Heart right ventricle (tissue), 16 donors: ENCODE measurements at regions of chr16 and their contacts with region 1.

Region 1: GRCh38 chr16:70380861-70381603 is 34.3 kb downstream of the DDX19A start:
- DNase-seq: peak; percentile 96 to 97
- ATAC-seq: peak; percentile 94 to 98 (median 96)
- H3K4me3 ChIP-seq: peak overlapping the region; percentile 56 to 85 (median 66)
- H3K27ac ChIP-seq: peak overlapping the region; percentile 16 to 91 (median 86)
- H3K4me1 ChIP-seq: peaks cover 0 to 26% (median 18%) of the 10 kb centered on the region in 9 donors
- H3K27me3 ChIP-seq: no peaks in the 10 kb centered on the region
- CTCF ChIP-seq: peak in 6 of 9 donors; percentile 31 to 60 (median 46)

Region 2: GRCh38 chr16:70395345-70395901 is 14.4 kb after region 1 on chr16:
- intact Hi-C with region 1: no loop called
- DNase-seq: peak; percentile 59 to 76
- ATAC-seq: peak; percentile 57 to 88 (median 78)
- H3K4me3 ChIP-seq: no peak overlapping the region
- H3K27ac ChIP-seq: no peak overlapping the region
- H3K4me1 ChIP-seq: peaks cover 4 to 22% (median 18%) of the 10 kb centered on the region in 9 donors
- H3K27me3 ChIP-seq: no peaks in the 10 kb centered on the region
- CTCF ChIP-seq: peak; percentile 35 to 85 (median 73)

Region 3: DNA sequence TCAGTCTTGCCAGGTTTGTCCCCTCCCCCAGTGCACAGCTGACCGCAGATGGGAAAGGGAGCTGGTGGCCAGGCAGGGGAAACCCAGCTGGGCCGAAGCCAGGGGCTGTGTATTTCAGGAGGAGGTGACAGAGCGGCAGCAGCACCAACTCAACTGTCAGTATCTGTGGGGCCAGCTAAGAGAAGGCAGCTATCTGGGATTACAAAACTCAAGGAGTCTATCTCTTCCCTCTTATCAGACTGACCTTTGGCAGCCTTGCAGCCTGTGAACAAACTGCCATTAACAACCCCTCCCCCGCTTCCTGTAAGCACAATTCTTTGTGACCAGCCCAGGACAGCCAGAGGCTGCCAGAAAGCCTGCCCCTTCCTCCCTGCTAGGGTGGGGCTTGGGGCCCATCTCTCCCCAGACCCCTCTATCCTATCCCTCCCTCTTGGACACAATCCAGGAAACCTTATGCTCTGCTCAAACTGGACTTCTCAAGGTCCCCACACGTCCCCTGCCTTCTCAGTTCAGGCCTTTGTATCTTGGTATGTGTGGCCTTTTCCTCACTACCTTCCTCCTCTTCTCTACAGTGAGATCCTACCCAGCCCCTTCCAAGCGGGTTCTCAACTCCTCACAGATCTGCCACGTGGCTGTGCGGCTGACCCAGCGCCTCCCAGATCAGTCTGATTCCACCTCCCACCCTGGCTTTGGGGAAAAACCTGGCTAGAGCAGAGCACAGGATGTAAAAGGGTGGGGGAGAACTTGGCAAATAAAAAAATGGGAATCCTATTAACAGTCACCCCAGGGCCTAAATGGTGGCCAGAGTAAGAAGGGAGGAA is 47.4 kb after region 1 on chr16:
- intact Hi-C with region 1: loop called in 4 of 10 experiments (anchors 2 to 5 kb)
- DNase-seq: peak; percentile 96
- ATAC-seq: peak; percentile 85 to 94 (median 90)
- H3K4me3 ChIP-seq: peak overlapping the region in 5 of 10 donors; percentile 0 to 12 (median 8)
- H3K27ac ChIP-seq: peak overlapping the region; percentile 68 to 94 (median 88)
- H3K4me1 ChIP-seq: peaks cover 47 to 93% (median 68%) of the 10 kb centered on the region in 9 donors
- H3K27me3 ChIP-seq: no peaks in the 10 kb centered on the region
- CTCF ChIP-seq: no peak

Region 4: DNA sequence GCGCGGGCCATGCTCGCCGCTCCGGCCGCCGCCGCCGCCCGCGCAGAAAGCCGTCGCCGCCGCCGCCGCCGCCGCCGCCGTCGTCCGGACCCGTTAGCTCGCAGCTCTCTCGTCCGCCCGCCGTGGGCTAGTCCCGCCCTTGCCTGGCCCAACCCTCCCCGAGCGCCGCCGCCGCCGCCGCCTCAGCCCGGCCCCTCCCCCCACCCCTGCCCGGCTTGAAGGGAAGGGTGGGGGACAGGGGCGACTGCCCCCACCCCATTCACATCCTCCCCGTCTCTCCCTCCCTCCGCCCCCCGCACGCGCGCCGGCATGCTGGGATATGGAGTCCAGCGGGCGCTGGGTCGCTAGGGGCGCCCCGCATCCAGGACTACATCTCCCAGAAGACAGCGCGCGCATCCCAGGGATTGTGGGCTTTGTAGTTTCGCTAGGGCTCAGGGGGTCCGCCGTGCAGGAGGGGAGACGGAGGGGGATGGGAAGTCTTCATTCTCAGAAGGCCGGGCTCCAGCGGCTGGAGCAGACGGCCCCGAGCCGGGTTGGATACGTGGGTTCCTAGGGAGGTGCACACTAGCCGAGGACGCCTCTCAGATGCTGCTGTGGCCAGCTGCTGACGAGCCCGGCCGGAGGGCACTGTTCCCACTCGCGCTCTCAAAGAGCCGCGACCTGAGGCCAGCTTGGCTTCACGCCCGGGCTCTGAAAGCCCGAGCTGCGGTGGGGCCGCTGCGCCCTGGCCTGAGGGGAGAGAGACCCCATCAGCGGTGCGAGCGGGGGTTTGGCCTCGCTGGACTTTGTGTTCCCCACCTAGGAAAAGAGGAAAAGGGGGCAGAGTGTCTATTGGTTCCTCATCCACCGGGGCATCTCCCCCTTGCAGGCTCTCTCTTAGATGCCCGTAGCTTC is 58.2 kb after region 1 on chr16 and contains the start of gene ST3GAL2:
- intact Hi-C with region 1: loop called in 6 of 10 experiments (anchors 1 to 5 kb)
- DNase-seq: peak; percentile 95 to 96
- ATAC-seq: peak; percentile 98 to 99 (median 98)
- H3K4me3 ChIP-seq: peak within 1 kb of the TSS; percentile 64 to 91 (median 79)
- H3K27ac ChIP-seq: peak within 1 kb of the TSS; percentile 72 to 89 (median 83)
- H3K4me1 ChIP-seq: peaks cover 3 to 50% (median 38%) of the 10 kb centered on the region in 9 donors
- H3K27me3 ChIP-seq: no peaks in the 10 kb centered on the region
- CTCF ChIP-seq: peak in 5 of 9 donors; percentile 15 to 39 (median 32)
- total RNA-seq, gene ST3GAL2: 15.1 to 37.1 (median 20.9) TPM

Region 5: GRCh38 chr16:70454222-70455034 is 73.4 kb after region 1 on chr16 and contains the start of gene FCSK:
- intact Hi-C with region 1: loop called in 4 of 10 experiments (anchors 1 to 5 kb)
- DNase-seq: peak; percentile 56 to 73
- ATAC-seq: peak; percentile 90 to 94 (median 93)
- H3K4me3 ChIP-seq: peak within 1 kb of the TSS; percentile 84 to 100 (median 93)
- H3K27ac ChIP-seq: peak within 1 kb of the TSS; percentile 85 to 100 (median 96)
- H3K4me1 ChIP-seq: peaks cover 0 to 22% (median 17%) of the 10 kb centered on the region in 9 donors
- H3K27me3 ChIP-seq: peaks cover 0 to 12% (median 0%) of the 10 kb centered on the region in 7 donors
- CTCF ChIP-seq: peak in 1 of 9 donors; percentile 18
- total RNA-seq, gene FCSK: 6.5 to 12.6 (median 9.0) TPM

Region 6: GRCh38 chr16:70523076-70523742 is 142.2 kb after region 1 on chr16 and contains the start of gene COG4:
- intact Hi-C with region 1: loop called in 4 of 10 experiments (anchors 5 to 10 kb)
- DNase-seq: peak; percentile 87 to 91
- ATAC-seq: peak; percentile 91 to 96 (median 94)
- H3K4me3 ChIP-seq: peak within 1 kb of the TSS; percentile 66 to 98 (median 83)
- H3K27ac ChIP-seq: peak within 1 kb of the TSS; percentile 77 to 94 (median 88)
- H3K4me1 ChIP-seq: peaks cover 7 to 56% (median 43%) of the 10 kb centered on the region in 9 donors
- H3K27me3 ChIP-seq: no peaks in the 10 kb centered on the region
- CTCF ChIP-seq: no peak
- total RNA-seq, gene COG4: 33.3 to 56.8 (median 40.7) TPM